Left colon (tissue), 2 donors: ENCODE measurements at regions of chr1 and their contacts with region 1.

Region 1: DNA sequence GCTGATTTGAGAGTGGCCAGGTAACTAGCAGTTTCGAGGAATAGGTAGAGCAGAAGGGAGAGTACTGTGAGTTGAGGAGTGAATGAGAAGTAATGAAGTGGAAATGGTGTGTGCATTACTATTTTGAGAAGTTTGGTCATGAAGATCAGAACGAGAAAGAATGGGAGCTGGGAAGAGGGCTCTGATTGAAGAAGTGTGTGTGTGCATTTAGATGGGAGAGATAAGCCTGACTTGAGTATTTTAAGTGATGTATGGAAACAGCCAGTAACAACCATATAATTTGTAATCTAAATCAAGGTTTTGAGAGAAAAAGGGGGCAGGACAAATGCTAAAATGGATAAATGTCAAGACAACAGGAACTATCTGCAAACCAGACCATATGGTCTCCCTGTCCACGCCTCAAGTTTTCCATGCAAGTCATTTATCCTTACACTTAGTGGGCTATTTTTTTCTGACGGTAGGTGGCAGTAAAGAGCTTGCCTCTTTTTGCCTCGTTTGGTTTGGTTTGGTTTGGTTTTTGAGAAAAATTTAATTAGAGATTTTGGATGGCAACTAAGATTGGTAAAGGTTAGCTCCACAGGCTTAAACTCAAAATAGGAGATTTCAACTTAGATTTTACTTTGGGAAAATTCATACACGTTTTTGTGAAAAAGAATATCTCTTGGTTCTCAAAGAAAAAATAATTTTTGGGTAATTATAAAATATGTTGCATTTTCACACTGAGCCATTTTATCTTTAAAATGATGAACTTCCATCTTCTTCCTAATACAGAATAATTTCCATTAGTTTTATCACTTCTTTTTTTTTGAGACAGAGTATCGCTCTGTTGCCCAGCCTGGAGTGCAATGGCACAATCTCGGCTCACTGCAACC is 9.5 kb upstream of the B3GALNT2 start:
- DNase-seq: no peak
- ATAC-seq: peak; percentile 65

Region 2: DNA sequence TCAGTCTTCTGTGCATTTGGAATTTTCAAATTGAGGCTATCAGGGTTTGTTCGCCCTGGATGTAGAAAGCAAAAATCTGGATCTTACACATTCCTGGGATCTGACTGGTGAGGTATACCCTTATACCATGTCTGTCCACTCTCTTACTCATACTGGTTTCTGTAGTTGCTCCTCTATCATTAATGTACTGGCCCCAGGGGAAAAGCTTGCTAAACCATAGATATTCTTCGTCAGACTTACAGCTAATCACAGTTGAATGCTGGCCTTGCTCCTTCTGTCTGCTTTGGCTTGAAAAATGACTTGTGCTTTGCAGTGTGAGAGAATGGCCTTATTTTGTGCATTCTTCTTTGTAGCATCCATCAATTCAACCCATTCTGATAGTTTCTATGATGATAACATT is 116.0 kb before region 1 on chr1:
- intact Hi-C with region 1: no loop called
- DNase-seq: no peak
- ATAC-seq: no peak

Region 3: GRCh38 chr1:235583511-235584001 is 69.8 kb after region 1 on chr1:
- intact Hi-C with region 1: no loop called
- DNase-seq: no peak
- ATAC-seq: no peak

Region 4: DNA sequence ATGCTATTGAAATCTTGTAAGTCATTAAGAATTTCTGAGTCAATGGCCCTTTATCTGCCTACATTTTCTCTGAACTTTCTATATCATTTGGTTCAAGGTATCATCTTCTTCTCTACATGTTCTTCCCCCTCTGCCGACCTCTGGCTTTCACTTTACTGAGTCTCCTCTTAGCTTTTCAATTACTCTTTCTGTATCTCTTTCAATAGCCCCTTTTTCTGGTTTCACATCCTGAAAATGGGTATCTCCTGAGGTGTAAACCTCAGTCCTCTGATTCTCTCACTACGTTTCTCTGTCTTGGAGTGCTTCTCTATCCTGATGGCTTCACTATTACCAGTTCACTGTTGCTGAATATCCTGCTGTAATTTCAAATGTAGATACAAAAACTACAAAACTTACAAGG is 254.1 kb after region 1 on chr1:
- intact Hi-C with region 1: loop called in 1 of 2 experiments (anchors 10 kb)
- DNase-seq: no peak
- ATAC-seq: no peak